GM23248 (cell line): ENCODE measurements at regions of chr1 and their contacts with region 1.

Region 1: DNA sequence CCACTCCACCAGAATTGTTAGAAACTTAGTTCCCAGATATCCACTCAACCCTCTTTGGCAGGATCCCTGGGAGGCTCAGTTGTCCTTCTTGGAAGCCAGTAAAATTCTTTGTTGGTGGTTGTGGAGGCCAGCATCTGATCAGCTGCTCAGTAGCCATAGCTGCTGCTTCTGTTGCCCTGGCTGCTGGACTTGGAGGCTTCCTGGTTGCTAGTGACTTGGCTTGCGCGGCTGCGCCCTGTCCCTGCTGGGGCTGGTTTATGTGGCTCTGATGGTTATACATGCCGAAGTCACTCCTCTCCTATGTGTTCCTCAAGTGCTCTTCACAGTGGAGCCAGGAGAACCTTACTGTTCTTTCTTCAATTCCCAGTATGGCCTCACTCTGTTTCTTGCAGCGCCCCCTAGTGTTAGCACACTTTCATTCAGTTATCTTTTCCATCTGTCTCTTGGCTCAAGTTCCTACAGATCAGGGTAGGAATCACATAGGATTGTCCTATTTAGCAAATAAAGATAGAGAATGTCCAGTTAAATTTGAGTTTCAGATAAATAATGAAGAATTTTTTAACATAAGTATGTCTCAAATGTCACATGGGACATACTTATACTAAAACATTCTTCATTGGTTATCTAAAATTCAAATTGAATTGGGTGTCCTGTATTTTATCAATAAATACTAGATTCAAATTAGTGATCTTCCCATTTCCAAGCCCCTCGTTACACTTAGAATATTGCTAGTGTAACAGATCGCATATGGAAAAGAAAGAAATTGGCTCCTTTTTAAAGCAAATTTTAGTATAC is 176.4 kb downstream of the TGFB2 start:
- DNase-seq: peak; percentile 69
- H3K4me3 ChIP-seq: no peak overlapping the region
- H3K27ac ChIP-seq: no peak overlapping the region
- H3K4me1 ChIP-seq: 0 out of 2 replicates have a peak, but pooled peaks cover 6% of the 10 kb centered on the region
- H3K27me3 ChIP-seq: no peaks in the 10 kb centered on the region

Region 2: GRCh38 chr1:218361298-218362065 is 160.1 kb before region 1 on chr1:
- in situ Hi-C with region 1: loop called (anchors 10 kb)
- DNase-seq: peak; percentile 69
- H3K4me3 ChIP-seq: no peak overlapping the region
- H3K27ac ChIP-seq: no peak overlapping the region
- H3K4me1 ChIP-seq: peaks cover 12% of the 10 kb centered on the region
- H3K27me3 ChIP-seq: no peaks in the 10 kb centered on the region

Region 3: GRCh38 chr1:218967836-218968235 is 446.3 kb after region 1 on chr1:
- in situ Hi-C with region 1: no loop called
- DNase-seq: no peak
- H3K4me3 ChIP-seq: no peak overlapping the region
- H3K27ac ChIP-seq: no peak overlapping the region
- H3K4me1 ChIP-seq: no peaks in the 10 kb centered on the region
- H3K27me3 ChIP-seq: no peaks in the 10 kb centered on the region